Activated naive CD4-positive, alpha-beta T cell treated with anti-CD3 and anti-CD28 coated beads, Interleukin-2, amount 10 ng/mL, durations not matched to agents 7 days and 5 days (primary cell): ENCODE measurements at regions of chr9 and their contacts with region 1.

Region 1: DNA sequence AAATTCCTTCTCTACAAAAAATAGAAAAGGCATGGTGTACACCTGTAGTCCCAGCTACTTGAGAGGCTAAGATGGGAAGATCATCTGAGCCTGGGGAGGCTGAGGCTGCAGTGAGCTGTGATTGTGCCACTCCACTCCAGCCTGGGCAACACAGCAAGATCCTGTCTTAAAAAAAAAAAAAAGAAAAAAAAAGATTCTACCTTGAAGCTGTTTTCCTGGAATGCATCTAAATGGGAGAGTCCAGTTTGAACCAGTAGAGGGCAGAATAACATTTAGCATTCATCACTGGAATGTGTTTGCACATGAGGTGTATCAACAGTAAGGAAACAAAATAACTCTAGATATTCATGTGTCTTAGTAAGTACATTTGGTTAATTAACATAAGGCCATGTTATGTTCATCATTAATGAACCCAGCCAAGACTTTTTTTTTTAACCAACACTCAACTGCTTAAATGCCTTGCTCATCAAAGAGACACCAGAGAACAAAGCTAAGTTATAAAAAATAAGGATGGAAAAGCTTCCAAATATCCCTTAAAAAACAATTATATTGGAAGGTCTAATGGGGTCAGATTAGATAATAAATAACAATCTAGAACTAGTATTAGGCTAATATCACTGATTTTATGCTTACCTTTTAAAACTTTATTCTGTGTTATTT is 16.1 kb downstream of the IFNE start:
- DNase-seq: no peak
- H3K4me3 Mint-ChIP-seq: no peak overlapping the region
- H3K27ac Mint-ChIP-seq: no peak overlapping the region
- H3K4me1 Mint-ChIP-seq: no peaks in the 10 kb centered on the region
- H3K27me3 Mint-ChIP-seq: peaks cover 24% of the 10 kb centered on the region

Region 2: DNA sequence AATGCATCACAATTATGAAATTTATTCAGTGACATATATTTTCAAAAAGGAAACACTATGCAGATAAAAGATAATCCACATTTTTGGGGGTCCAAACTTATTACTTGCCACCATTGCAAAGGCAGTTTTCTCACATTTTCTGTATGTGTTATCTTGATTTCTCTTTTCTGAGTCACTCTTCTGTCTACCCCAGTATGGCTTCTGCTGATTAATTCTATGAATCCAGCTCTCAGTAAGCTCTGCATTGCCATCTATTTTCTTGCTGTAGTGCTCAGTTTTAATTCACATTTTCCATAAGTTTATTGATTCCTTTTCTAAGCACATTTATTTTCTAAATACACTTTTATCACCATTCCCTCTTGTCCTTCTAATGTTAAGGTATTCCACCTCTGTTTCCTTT is 260.8 kb before region 1 on chr9:
- CTCF ChIA-PET with region 1: no interaction called
- DNase-seq: no peak
- H3K4me3 Mint-ChIP-seq: no peak overlapping the region
- H3K27ac Mint-ChIP-seq: no peak overlapping the region
- H3K4me1 Mint-ChIP-seq: no peaks in the 10 kb centered on the region
- H3K27me3 Mint-ChIP-seq: peaks cover 16% of the 10 kb centered on the region

Region 3: DNA sequence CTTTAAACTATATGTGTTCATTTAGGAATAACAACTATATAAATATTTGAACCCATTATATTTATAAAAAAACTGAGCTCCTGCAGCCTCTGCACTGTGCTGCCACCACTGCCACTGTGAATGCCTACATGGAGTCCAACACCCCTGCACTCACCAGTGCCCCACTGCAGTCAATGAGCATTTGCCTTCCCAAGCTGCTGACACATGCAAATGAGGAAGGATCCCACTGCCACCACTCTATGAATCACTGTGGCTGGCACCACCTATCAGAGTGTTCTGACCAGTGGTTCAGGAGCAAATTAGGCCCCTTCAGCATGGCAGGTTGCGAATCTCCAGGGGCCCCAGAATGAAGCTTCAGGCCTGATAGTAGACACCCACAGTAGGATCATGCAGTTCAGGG is 170.0 kb before region 1 on chr9:
- CTCF ChIA-PET with region 1: no interaction called
- DNase-seq: no peak
- H3K4me3 Mint-ChIP-seq: no peak overlapping the region
- H3K27ac Mint-ChIP-seq: no peak overlapping the region
- H3K4me1 Mint-ChIP-seq: peaks cover 3% of the 10 kb centered on the region
- H3K27me3 Mint-ChIP-seq: peaks cover 12% of the 10 kb centered on the region

Region 4: DNA sequence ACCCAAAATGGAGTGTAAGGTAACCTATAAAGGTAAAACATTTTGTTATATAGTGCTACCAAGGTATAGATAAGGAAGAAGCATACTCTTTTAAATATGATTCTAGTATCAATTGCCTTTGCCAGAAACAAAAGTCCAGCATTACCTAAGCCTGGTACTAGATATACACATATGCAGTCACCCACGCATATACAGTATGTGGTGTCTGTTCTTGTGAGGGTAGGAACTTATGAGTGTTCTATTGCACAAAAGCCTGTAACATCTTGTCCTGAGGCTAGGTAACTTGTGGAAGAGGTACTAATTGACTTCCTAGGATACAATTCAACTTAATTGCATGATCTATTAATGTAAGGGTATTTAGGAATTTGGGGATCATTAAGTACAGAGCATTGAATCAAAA is 47.4 kb after region 1 on chr9:
- CTCF ChIA-PET with region 1: no interaction called
- DNase-seq: no peak
- H3K4me3 Mint-ChIP-seq: no peak overlapping the region
- H3K27ac Mint-ChIP-seq: no peak overlapping the region
- H3K4me1 Mint-ChIP-seq: no peaks in the 10 kb centered on the region
- H3K27me3 Mint-ChIP-seq: no peaks in the 10 kb centered on the region

Region 5: GRCh38 chr9:21709464-21710058 is 243.6 kb after region 1 on chr9:
- CTCF ChIA-PET with region 1: interaction called, 11 read pairs
- DNase-seq: peak; percentile 76
- H3K4me3 Mint-ChIP-seq: no peak overlapping the region
- H3K27ac Mint-ChIP-seq: no peak overlapping the region
- H3K4me1 Mint-ChIP-seq: peaks cover 4% of the 10 kb centered on the region
- H3K27me3 Mint-ChIP-seq: peaks cover 13% of the 10 kb centered on the region